ENCODE measurements at regions of chr3 and their contacts with region 1.

Region 1: DNA sequence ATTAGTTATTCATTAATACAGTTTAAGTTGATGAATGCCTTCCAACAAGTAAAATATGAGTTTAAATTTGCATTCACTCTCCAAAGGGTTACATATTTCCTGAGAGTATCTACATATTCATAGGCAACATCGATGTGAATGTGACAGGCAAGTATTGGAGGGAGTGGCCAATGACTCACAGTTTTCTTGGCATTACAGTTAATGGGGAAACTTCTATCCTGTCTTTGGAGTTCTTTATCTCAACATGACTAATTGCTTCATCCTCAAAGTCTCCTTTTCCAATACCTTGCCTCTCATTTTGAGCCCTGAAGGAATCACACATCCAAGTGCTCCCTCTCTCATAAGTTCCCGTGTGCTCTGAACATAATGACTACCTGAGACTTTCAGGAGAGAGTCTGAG is 439.7 kb upstream of the FRG2C start:
- DNase-seq: no peak
- H3K4me3 ChIP-seq: no peak overlapping the region
- H3K27ac ChIP-seq: no peak overlapping the region
- H3K4me1 ChIP-seq: no peaks in the 10 kb centered on the region
- H3K27me3 ChIP-seq: no peaks in the 10 kb centered on the region
- CTCF ChIP-seq: no peak
- POLR2A ChIP-seq: no peak

Region 2: DNA sequence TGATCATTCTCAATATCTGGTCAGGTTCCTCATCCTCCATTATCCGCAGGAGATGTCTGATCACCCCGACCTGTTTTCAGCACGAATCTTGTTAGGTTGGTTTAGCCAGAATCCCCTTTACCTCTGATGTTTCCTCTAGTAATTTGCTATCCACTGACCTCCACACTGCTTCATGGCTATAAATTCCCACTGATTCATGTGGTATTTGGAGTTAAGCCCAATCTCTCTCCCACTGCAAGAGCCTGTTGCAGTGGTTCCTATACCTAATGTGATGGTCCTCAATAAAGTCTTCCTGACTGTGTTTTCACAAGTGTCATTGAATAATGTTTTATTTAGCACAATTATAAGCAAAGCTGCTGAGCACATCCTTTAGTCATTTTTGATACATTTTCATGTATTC is 485.2 kb before region 1 on chr3:
- intact Hi-C with region 1: no loop called
- DNase-seq: no peak
- H3K4me3 ChIP-seq: no peak overlapping the region
- H3K27ac ChIP-seq: no peak overlapping the region
- H3K4me1 ChIP-seq: no peaks in the 10 kb centered on the region
- H3K27me3 ChIP-seq: no peaks in the 10 kb centered on the region
- CTCF ChIP-seq: no peak
- POLR2A ChIP-seq: no peak

Region 3: DNA sequence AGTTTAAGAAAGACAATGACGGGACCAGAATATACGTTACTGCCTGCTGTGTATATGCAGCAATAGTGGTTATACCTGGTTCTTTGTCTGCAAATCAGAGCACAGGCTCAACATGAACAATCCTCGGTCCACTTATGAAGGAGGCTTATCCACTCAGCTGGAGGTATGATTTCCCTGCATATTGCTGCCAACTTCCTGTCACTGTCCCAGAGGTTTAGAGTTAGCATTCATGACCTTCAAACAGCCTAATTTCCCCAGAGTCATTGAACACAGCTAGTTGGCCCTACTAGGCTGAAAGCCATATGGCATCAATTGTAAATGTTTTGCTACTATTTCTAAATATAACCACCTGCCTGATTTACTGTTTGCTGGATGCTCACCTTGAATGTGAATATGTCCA is 785.8 kb after region 1 on chr3:
- intact Hi-C with region 1: loop called (anchors 10 kb)
- DNase-seq: no peak
- H3K4me3 ChIP-seq: no peak overlapping the region
- H3K27ac ChIP-seq: no peak overlapping the region
- H3K4me1 ChIP-seq: no peaks in the 10 kb centered on the region
- H3K27me3 ChIP-seq: no peaks in the 10 kb centered on the region
- CTCF ChIP-seq: no peak
- POLR2A ChIP-seq: no peak

Measured in breast epithelium (tissue), 4 donors.